ENCODE measurements at regions of chr3 and their contacts with region 1.

Region 1: GRCh38 chr3:50523279-50523811 is 19.9 kb upstream of the CACNA2D2 start:
- DNase-seq: no peak

Region 2: DNA sequence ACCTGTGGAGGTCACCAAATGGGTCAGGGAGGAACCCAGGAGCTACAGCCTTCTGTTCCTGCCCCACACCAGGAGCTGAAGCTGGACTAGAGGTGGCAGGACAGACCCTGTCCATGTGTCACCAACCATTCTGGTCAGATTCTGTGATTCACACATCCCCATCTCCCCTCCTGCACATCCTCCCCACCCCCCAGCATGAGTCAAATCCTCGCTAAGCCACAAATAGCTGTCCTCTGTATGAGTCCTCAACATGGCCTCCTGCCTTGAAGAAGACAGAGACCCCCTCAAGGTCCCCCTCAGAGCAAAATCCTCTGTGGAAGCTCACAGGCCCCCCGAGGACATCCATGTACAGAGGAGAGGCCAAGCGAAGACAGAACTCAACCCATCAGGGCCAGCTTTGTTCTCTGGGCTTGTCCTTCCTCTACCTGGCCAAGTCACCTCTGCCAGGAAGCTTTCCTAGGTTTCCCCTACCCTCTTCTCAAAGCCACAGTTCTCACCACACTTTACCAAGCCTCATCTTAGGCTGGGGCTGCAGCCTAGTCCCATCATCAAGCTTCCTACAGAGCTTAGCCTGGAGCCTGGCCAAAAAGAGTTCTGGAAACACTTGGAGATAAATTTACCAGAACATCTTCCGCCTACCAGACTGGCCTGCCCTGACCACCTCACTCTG is 37.0 kb before region 1 on chr3:
- CTCF ChIA-PET with region 1: no interaction called
- POLR2A ChIA-PET with region 1: no interaction called
- DNase-seq: no peak

Region 3: DNA sequence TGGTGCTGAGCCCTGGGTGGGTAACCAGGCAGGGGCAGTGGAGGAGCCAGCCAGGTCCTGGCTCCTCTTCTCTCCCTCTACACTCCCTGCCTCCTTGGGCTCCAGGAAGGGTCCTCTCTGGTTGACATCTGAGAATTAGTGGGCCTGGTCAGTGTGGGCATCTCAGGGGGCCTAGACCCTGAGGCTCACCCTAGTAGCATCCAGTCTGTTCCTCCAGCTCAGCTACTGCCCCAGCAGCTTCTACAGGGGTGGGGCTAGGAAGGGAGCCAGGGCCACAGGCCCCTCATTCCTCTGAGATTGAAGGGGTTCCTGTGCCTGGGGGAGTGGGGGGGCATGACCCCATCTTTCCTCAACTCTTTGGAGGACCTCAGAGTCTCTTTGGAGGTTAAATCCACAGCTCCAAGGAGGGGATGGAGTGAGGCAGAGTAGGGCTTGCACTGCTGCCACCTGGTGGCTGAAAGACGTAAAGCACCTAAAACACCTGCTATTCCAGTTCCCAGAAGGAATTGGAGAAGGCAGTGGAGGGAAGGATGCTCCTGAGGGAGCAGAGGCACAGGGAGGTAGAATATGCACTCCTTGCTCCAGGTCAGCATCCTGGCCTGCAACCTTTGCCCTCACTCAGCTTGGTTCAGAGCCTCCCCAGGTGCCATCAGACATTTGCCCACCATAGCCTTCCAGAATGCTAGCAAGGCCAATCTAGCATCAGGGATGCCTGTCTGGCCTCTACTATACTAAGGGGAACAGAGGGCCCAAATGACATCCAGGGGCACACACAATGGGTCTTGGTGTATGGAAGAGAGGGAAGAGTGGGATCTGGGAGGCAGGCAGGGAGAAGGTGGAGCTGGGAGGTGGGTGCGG is 19.1 kb after region 1 on chr3:
- CTCF ChIA-PET with region 1: interaction called, 25 read pairs
- POLR2A ChIA-PET with region 1: no interaction called
- DNase-seq: peak; percentile 88

Region 4: DNA sequence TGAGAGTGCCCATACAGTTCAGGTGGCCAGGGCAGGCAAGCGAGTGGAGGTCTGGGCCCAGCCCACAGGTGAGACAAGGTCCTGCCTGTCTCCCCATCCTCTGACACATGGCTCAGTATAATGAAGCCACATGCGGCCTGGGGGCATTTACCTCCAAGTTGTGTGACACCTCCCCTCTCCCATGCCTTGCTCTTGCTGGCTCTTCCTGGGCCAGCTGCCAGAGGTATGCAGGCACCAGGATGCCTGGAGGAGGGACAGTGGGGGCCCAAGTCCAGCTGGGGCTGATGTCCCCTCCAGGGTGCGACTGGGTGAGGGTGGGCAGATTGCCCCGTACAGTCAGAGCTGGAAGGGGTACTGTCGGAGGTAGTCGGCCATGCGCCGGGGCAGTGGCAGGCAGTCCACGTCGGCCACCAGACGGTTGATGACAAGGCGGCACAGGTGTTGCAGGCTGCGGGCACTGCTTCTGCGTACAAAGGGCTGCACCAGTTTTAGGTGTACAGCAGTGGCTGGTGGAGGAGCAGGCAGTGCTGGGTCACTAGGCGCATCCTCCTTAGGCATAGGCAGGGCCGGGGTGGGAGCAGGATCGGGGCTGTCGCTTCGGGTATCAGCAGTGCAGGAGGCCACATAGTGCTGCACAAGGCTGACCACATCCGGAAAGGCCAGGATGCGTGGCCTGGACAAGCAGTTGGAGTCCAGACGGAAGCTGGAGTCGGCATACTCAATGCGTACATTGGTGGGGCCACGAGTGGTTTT is 84.1 kb after region 1 on chr3:
- CTCF ChIA-PET with region 1: no interaction called
- POLR2A ChIA-PET with region 1: no interaction called
- DNase-seq: no peak

Region 5: GRCh38 chr3:50926868-50927267 is 403.5 kb after region 1 on chr3:
- CTCF ChIA-PET with region 1: no interaction called
- POLR2A ChIA-PET with region 1: no interaction called
- DNase-seq: no peak

Measured in HEK293T (cell line).